ENCODE measurements at regions of chr12 and their contacts with region 1.

Region 1: DNA sequence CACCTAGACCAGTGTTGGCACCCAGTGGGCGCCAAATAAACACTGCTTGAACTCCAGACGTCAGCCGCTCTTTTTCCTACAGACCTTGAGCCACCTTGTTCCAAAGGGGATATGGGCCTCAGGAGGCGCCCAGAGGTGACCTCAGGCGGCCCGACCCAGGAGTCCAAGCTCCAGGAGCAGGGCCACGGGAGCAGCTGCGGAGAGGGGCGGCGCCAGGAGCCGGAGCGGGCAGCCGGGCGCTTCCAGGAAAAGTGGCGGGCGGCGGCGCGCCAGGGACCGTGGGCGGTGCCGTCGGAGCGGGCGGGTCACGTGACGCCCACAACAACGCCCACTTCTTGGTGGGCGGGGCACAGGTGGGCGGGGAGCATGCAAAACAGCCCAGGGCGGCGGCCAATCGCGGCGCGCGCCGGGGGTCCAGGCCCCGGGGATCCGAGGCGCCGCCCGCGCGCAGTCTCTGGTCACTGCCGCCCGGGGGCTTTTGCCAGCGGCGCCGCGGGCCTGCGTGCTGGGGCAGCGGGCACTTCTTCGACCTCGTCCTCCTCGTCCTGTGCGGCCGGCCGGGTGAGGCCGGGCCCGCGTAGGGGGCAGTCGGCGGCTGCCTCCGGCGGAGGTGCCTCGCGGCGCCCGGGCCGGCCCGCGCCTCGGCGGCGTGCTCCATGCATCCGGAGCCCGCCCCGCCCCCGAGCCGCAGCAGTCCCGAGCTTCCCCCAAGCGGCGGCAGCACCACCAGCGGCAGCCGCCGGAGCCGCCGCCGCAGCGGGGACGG is at the start of gene ORAI1:
- DNase-seq: peak; percentile 79
- H3K4me3 ChIP-seq: peak within 1 kb of the TSS; percentile 48 to 95 (median 84)
- H3K27ac ChIP-seq: peak within 1 kb of the TSS; percentile 84 to 97 (median 96)
- H3K4me1 ChIP-seq: peaks cover 28 to 65% (median 40%) of the 10 kb centered on the region in 3 donors
- H3K27me3 ChIP-seq: no peaks in the 10 kb centered on the region
- CTCF ChIP-seq: peak in 3 of 6 experiments; percentile 19 to 41 (median 37)
- POLR2A ChIP-seq: peak in 2 of 4 donors; percentile 70 to 88
- total RNA-seq, gene ORAI1: 4.4 to 7.9 (median 7.0) TPM

Region 2: DNA sequence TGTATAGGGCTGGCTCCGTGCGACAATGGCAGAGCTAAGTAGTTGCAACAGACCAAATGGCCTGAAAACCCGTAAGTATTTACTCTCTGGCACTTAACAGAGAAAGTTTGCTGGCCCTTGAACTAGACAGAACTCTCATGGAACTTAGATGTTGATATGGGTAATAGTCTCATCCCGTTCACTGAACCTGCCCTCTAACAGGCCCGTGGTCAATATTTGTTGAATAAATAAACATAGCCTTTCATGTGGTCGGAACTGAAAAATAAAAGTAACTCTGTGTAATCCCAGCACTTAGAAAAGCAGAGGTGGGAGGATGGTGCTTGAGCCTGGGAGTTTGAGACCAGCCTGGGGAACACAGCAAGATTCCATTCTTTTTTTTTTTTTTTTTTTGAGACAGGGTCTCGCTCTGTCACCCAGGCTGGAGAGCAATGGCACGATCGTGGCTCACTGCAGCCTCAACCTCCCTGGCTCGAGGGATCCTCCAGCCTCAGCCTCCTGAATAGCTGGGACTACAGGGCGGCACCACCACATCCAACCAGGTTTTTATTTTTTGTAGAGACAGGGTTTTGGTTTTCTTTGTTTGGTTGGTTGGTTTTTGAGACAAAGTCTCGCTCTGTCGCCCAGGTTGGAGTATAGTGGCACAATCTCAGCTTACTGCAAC is 75.2 kb before region 1 on chr12:
- intact Hi-C with region 1: loop called (anchors 5 kb)
- DNase-seq: no peak
- H3K4me3 ChIP-seq: no peak overlapping the region
- H3K27ac ChIP-seq: no peak overlapping the region
- H3K4me1 ChIP-seq: peaks cover 0 to 6% (median 0%) of the 10 kb centered on the region in 3 donors
- H3K27me3 ChIP-seq: no peaks in the 10 kb centered on the region
- CTCF ChIP-seq: no peak
- POLR2A ChIP-seq: no peak

Region 3: DNA sequence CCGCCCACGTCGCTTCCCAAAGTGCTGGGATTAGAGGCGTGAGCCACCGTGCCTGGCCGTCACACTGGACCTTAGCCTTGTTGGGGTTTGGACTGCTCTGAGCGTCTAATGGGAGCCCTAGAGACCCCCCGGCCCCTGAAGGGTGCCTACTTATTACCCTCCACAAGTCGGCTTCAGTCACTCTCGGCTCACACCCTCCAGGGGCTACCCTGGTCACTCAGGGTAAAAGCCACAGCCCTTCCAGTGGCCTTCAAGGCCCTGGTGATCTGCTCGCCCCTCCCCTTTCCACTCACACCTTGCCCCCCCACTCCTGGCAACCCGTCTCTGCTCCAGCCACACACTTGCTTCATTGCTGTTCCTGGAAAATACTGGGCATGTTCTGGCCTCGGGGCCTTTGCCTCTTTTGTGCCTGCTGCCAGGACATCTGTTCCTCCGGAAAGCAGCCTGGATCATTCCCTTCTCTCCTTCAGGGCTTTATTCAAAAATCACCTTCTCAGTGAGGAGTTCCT is 46.8 kb after region 1 on chr12:
- intact Hi-C with region 1: loop called (anchors 10 kb)
- DNase-seq: no peak
- H3K4me3 ChIP-seq: peak overlapping the region; percentile 33 to 65 (median 50)
- H3K27ac ChIP-seq: peak overlapping the region; percentile 51 to 77 (median 72)
- H3K4me1 ChIP-seq: peaks cover 7 to 47% (median 10%) of the 10 kb centered on the region in 3 donors
- H3K27me3 ChIP-seq: no peaks in the 10 kb centered on the region
- CTCF ChIP-seq: no peak
- POLR2A ChIP-seq: no peak

Measured in esophagus squamous epithelium (tissue), 5 donors.